ENCODE measurements at regions of chr19 and their contacts with region 1.

Region 1: GRCh38 chr19:44782729-44783128 is 5.0 kb downstream of the CBLC start:
- DNase-seq: no peak
- ATAC-seq: no peak
- H3K4me3 ChIP-seq: no peak overlapping the region
- H3K27ac ChIP-seq: no peak overlapping the region
- H3K4me1 ChIP-seq: peaks cover 0 to 9% (median 4%) of the 10 kb centered on the region in 12 donors
- H3K27me3 ChIP-seq: peaks cover 0 to 5% (median 2%) of the 10 kb centered on the region in 9 donors
- CTCF ChIP-seq: no peak
- POLR2A ChIP-seq: no peak

Region 2: GRCh38 chr19:44808463-44809371 is 26.0 kb after region 1 on chr19 and contains the start of gene BCAM:
- intact Hi-C with region 1: loop called in 1 of 10 experiments (anchors 2 kb)
- DNase-seq: peak; percentile 87 to 93 (median 93)
- ATAC-seq: peak; percentile 80 to 96 (median 92)
- H3K4me3 ChIP-seq: peak within 1 kb of the TSS; percentile 32 to 94 (median 77)
- H3K27ac ChIP-seq: peak within 1 kb of the TSS; percentile 8 to 97 (median 86)
- H3K4me1 ChIP-seq: peaks cover 0 to 50% (median 22%) of the 10 kb centered on the region in 12 donors
- H3K27me3 ChIP-seq: peaks cover 0 to 8% (median 0%) of the 10 kb centered on the region in 9 donors
- CTCF ChIP-seq: no peak
- POLR2A ChIP-seq: peak in 1 of 2 donors; percentile 68
- total RNA-seq, gene BCAM: 50.9 to 160 (median 94.3) TPM

Region 3: GRCh38 chr19:44903602-44904425 is 121.1 kb after region 1 on chr19:
- intact Hi-C with region 1: no loop called
- DNase-seq: peak; percentile 59 to 87 (median 65)
- ATAC-seq: peak; percentile 48 to 79 (median 68)
- H3K4me3 ChIP-seq: no peak overlapping the region
- H3K27ac ChIP-seq: no peak overlapping the region
- H3K4me1 ChIP-seq: peaks cover 0 to 23% (median 6%) of the 10 kb centered on the region in 12 donors
- H3K27me3 ChIP-seq: peaks cover 0 to 34% (median 15%) of the 10 kb centered on the region in 9 donors
- CTCF ChIP-seq: peak; percentile 94 to 100 (median 99)
- POLR2A ChIP-seq: no peak

Region 4: GRCh38 chr19:45038931-45039893 is 256.5 kb after region 1 on chr19 and contains the start of gene CLASRP:
- intact Hi-C with region 1: no loop called
- DNase-seq: peak; percentile 93 to 94 (median 94)
- ATAC-seq: peak; percentile 95 to 99 (median 98)
- H3K4me3 ChIP-seq: peak within 1 kb of the TSS; percentile 73 to 99 (median 91)
- H3K27ac ChIP-seq: peak within 1 kb of the TSS; percentile 90 to 97 (median 96)
- H3K4me1 ChIP-seq: peaks cover 6 to 40% (median 31%) of the 10 kb centered on the region in 12 donors
- H3K27me3 ChIP-seq: no peaks in the 10 kb centered on the region
- CTCF ChIP-seq: no peak
- POLR2A ChIP-seq: peak in 1 of 2 donors; percentile 88
- total RNA-seq, gene CLASRP: 26.0 to 68.2 (median 32.4) TPM